ENCODE measurements at regions of chr3 and their contacts with region 1.

Region 1: DNA sequence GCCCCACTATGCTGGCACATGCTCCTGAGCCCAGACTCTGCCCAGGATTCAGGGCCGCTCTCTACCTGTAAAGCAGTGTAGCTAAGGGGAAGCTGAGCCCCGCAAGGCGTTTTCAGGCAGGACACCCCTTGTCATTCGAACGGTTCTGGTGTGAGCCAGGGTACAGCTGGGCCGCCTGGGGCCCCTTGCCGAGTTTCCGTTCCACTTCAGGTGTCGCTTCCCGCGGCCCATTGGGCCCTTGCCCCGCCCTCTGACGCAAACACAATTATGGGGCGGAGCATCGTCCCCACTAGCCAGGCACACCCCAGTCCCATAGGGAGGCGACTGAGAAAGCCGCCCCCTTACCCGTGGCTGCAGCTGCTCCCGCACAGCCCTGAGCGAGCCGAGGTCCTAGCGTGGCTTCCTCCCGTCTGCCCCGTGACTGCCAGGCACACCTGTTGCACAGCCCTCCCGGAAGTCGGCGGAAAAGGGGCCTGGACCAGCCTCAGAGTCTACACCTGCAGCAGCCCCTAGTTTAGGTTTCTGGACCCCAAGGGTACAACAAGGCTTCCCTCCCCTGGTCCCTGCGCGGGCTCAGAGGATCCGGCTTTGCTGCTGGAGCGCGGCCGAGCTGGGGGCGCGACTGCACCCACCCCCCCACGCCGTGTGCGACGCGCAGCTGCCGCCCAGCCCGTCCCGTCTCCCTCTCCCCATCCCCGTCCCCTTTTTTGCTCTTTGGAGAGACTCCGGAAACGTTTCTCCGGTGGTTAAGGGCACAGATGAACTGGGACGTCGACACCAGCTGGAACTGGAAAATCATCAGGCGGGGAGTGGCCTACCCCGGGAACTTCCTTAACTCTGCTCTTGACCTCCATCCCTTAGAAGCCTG is at the start of gene PLSCR2:
- DNase-seq: peak; percentile 83
- ATAC-seq: peak; percentile 95
- H3K4me3 Mint-ChIP-seq: peak within 1 kb of the TSS; percentile 67
- H3K27ac Mint-ChIP-seq: peak within 1 kb of the TSS; percentile 74
- H3K4me1 Mint-ChIP-seq: peaks cover 3% of the 10 kb centered on the region
- H3K27me3 Mint-ChIP-seq: no peaks in the 10 kb centered on the region
- total RNA-seq, gene PLSCR2: 0.25 TPM in 1 of 2 experiments, not detected in the other

Region 2: GRCh38 chr3:145767909-145768308 is 701.5 kb before region 1 on chr3:
- CTCF ChIA-PET with region 1: no interaction called
- POLR2A ChIA-PET with region 1: no interaction called
- intact Hi-C with region 1: no loop called
- DNase-seq: no peak
- ATAC-seq: no peak
- H3K4me3 Mint-ChIP-seq: no peak overlapping the region
- H3K27ac Mint-ChIP-seq: no peak overlapping the region
- H3K4me1 Mint-ChIP-seq: no peaks in the 10 kb centered on the region
- H3K27me3 Mint-ChIP-seq: no peaks in the 10 kb centered on the region

Region 3: DNA sequence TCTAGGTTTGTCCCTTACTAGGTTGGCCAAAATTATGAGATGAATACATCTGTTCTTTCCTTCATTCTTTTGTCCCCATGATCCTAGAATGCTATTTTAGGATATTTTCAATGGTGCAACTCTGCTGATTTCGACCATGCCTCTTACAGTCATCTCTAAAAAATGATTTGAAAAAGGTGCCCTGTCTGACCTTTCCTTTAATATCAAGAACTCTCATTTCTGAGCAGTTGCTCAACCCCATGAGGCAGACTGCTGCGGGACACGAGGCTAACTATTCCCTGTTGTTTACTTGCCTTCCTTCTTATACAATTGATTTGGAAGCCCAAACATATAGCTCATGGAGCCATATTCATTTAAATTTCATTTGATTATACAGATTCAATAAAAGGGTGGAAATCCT is 14.6 kb before region 1 on chr3:
- CTCF ChIA-PET with region 1: no interaction called
- POLR2A ChIA-PET with region 1: no interaction called
- intact Hi-C with region 1: no loop called
- DNase-seq: no peak
- ATAC-seq: no peak
- H3K4me3 Mint-ChIP-seq: no peak overlapping the region
- H3K27ac Mint-ChIP-seq: no peak overlapping the region
- H3K4me1 Mint-ChIP-seq: no peaks in the 10 kb centered on the region
- H3K27me3 Mint-ChIP-seq: no peaks in the 10 kb centered on the region

Region 4: GRCh38 chr3:146498002-146498736 is 28.8 kb after region 1 on chr3:
- CTCF ChIA-PET with region 1: interaction called, 3 read pairs
- POLR2A ChIA-PET with region 1: no interaction called
- intact Hi-C with region 1: loop called in 1 of 2 experiments (anchors 1 kb)
- DNase-seq: peak; percentile 62
- ATAC-seq: peak; percentile 74
- H3K4me3 Mint-ChIP-seq: peak overlapping the region; percentile 62
- H3K27ac Mint-ChIP-seq: peak overlapping the region; percentile 59
- H3K4me1 Mint-ChIP-seq: peaks cover 18% of the 10 kb centered on the region
- H3K27me3 Mint-ChIP-seq: no peaks in the 10 kb centered on the region

Region 5: DNA sequence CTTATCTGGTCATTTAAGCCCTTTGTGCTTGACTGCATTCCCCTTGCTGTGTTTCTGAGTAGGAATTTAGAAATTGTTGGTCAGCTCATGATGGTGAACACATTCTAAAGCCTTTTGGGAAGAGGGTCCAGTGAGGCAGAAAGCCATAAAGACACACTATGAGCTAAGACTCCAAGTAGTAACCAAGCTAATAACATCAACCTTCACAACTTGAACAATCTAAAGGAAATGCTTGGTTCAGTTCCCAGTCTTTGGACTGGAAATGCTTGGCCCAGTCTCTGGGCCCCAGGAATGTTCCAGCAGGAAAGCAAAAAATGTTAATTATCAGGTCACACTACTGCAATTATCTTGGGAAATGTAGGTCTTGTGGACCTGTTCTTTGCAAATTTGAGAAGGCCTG is 67.3 kb after region 1 on chr3:
- CTCF ChIA-PET with region 1: no interaction called
- POLR2A ChIA-PET with region 1: no interaction called
- intact Hi-C with region 1: no loop called
- DNase-seq: no peak
- ATAC-seq: no peak
- H3K4me3 Mint-ChIP-seq: no peak overlapping the region
- H3K27ac Mint-ChIP-seq: no peak overlapping the region
- H3K4me1 Mint-ChIP-seq: peaks cover 30% of the 10 kb centered on the region
- H3K27me3 Mint-ChIP-seq: no peaks in the 10 kb centered on the region